ENCODE measurements at regions of chr20 and their contacts with region 1.

Region 1: GRCh38 chr20:31822421-31823330 is 3.5 kb downstream of the MYLK2 start:
- DNase-seq: peak; percentile 70
- H3K4me3 Mint-ChIP-seq: no peak overlapping the region
- H3K27ac Mint-ChIP-seq: no peak overlapping the region
- H3K4me1 Mint-ChIP-seq: no peaks in the 10 kb centered on the region
- H3K27me3 Mint-ChIP-seq: no peaks in the 10 kb centered on the region
- CTCF ChIP-seq: peak; percentile 99

Region 2: DNA sequence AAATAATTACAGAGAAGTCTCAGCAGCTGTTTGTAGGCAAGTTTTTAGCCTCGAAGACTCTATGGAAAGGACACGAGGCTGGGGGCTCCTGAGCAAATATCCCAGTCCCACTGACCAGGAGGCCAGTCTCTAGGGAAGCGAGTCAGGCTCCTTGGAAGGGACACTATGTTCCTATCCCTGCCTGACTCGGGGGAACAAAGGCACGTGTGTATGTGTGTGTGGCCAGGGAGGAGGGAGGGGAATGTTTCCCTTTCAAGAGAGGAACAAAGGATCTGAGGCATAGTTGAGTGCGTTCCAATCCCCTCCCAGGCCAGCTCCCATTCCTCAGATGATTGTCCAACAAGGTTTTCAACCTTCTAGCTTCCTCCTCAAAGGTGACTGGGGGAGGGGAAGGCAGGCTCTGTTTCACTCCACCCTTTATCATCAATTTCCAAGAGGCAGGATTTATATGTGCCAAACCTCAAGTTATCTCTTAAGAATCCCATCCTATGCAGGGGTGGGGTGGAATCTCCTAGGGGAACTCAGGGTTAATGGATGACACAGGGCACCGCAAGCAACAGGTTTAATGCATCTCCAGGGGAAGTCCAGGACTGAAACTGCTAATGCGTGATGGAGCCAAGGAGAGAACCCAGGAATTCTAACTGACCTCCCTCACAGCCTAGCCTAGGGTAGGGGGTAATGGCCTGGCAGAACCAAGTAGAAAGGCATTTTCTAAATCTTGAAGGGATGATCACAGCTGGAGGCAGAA is 109.9 kb before region 1 on chr20:
- CTCF ChIA-PET with region 1: no interaction called
- POLR2A ChIA-PET with region 1: no interaction called
- intact Hi-C with region 1: no loop called
- DNase-seq: peak; percentile 92
- H3K4me3 Mint-ChIP-seq: peak overlapping the region; percentile 70
- H3K27ac Mint-ChIP-seq: peak overlapping the region; percentile 96
- H3K4me1 Mint-ChIP-seq: peaks cover 78% of the 10 kb centered on the region
- H3K27me3 Mint-ChIP-seq: no peaks in the 10 kb centered on the region
- CTCF ChIP-seq: no peak

Region 3: DNA sequence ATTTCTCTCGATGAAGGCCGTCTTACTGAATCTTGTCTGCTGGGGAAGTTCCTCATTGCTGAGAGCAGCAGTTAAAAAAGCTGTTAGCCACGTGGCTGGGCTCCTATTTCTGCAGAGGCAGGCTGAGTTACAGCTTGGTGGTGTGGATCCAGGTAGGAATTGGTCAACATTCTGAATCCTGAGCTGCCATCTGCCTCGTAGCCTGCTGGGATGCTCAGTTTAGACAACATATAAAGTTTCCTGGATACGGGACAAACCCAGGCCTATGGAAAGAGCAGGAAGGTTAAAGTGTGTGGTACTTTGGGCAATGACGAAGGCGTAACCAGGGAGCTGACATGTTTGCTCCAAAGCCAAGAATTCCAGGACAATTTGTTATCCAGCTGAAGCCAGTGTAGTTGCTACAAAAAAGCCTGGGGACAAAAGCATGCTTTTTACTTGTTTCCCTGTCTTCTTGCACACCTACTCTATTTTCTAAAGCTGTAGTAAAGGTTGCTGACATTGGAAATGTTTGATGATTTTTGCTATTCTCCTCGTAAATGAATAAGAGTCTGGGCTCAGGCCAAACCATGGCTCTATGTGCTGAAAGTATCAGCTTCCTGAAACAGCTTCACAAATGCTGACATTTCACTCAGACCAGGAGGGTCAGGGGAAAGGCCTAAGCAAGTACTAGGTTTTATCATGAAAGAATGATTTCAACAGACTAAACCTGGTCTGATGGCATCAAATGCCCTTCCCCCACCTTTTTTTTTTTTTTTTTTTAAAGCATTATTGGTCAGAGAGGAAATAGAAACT is 15.9 kb before region 1 on chr20:
- CTCF ChIA-PET with region 1: interaction called, 30 read pairs
- POLR2A ChIA-PET with region 1: interaction called, 3 read pairs
- intact Hi-C with region 1: no loop called
- DNase-seq: no peak
- H3K4me3 Mint-ChIP-seq: no peak overlapping the region
- H3K27ac Mint-ChIP-seq: no peak overlapping the region
- H3K4me1 Mint-ChIP-seq: no peaks in the 10 kb centered on the region
- H3K27me3 Mint-ChIP-seq: no peaks in the 10 kb centered on the region
- CTCF ChIP-seq: no peak

Region 4: GRCh38 chr20:31835977-31836852 is 13.5 kb after region 1 on chr20:
- CTCF ChIA-PET with region 1: interaction called, 45 read pairs
- POLR2A ChIA-PET with region 1: no interaction called
- intact Hi-C with region 1: no loop called
- DNase-seq: peak; percentile 93
- H3K4me3 Mint-ChIP-seq: no peak overlapping the region
- H3K27ac Mint-ChIP-seq: no peak overlapping the region
- H3K4me1 Mint-ChIP-seq: peaks cover 6% of the 10 kb centered on the region
- H3K27me3 Mint-ChIP-seq: no peaks in the 10 kb centered on the region
- CTCF ChIP-seq: no peak

Region 5: DNA sequence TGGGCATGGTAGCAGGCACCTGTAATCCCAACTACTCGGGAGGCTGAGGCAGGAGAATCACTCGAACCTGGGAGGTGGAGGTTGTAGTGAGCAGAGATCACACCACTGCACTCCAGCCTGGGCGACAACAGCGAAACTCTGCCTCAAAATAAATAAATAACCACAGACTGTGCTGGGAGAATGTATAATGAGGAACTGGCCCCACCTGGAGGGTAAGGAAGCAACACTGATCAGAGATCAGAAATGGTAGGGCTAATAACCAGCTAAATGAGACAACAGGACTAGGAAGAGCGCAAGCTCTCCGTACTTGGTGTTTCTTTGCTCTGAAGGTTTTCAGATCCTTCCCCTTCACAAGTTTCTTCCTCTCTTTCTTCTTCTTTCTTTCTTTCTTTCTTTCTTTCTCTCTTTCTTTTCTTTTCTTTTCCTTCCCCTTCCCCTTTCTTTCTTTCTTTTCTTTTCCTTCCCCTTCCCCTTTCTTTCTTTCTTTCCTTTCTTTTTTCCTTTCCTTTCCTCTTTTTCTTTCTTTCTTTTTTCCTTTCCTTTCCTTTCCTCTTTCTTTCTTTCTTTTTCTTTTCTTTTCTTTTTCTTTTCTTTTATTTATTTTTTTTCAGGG is 202.1 kb after region 1 on chr20:
- CTCF ChIA-PET with region 1: interaction called, 158 read pairs
- POLR2A ChIA-PET with region 1: interaction called, 3 read pairs
- intact Hi-C with region 1: no loop called
- DNase-seq: no peak
- H3K4me3 Mint-ChIP-seq: no peak overlapping the region
- H3K27ac Mint-ChIP-seq: no peak overlapping the region
- H3K4me1 Mint-ChIP-seq: no peaks in the 10 kb centered on the region
- H3K27me3 Mint-ChIP-seq: peaks cover 62% of the 10 kb centered on the region
- CTCF ChIP-seq: no peak

Region 6: GRCh38 chr20:32207626-32208498 is 385.2 kb after region 1 on chr20 and contains the starts of genes PLAGL2 and POFUT1:
- CTCF ChIA-PET with region 1: no interaction called
- POLR2A ChIA-PET with region 1: no interaction called
- intact Hi-C with region 1: loop called (anchors 5 kb)
- DNase-seq: peak; percentile 86
- H3K4me3 Mint-ChIP-seq: peak within 1 kb of the TSS; percentile 100
- H3K27ac Mint-ChIP-seq: peak within 1 kb of the TSS; percentile 100
- H3K4me1 Mint-ChIP-seq: peaks cover 64% of the 10 kb centered on the region
- H3K27me3 Mint-ChIP-seq: no peaks in the 10 kb centered on the region
- CTCF ChIP-seq: no peak
- total RNA-seq, gene PLAGL2: 18.4 and 18.6 TPM in 2 replicates
- total RNA-seq, gene POFUT1: 43.1 and 43.9 TPM in 2 replicates

Measured in MCF 10A (cell line).